Body of pancreas (tissue), 4 donors: ENCODE measurements at regions of chr6 and their contacts with region 1.

Region 1: GRCh38 chr6:106556368-106556960 is 72.8 kb downstream of the RTN4IP1 start:
- DNase-seq: no peak
- ATAC-seq: no peak
- H3K4me3 ChIP-seq: no peak overlapping the region
- H3K27ac ChIP-seq: no peak overlapping the region
- H3K4me1 ChIP-seq: no peaks in the 10 kb centered on the region
- H3K27me3 ChIP-seq: no peaks in the 10 kb centered on the region
- CTCF ChIP-seq: peak in 6 of 7 experiments; percentile 14 to 49 (median 36)
- POLR2A ChIP-seq: no peak

Region 2: DNA sequence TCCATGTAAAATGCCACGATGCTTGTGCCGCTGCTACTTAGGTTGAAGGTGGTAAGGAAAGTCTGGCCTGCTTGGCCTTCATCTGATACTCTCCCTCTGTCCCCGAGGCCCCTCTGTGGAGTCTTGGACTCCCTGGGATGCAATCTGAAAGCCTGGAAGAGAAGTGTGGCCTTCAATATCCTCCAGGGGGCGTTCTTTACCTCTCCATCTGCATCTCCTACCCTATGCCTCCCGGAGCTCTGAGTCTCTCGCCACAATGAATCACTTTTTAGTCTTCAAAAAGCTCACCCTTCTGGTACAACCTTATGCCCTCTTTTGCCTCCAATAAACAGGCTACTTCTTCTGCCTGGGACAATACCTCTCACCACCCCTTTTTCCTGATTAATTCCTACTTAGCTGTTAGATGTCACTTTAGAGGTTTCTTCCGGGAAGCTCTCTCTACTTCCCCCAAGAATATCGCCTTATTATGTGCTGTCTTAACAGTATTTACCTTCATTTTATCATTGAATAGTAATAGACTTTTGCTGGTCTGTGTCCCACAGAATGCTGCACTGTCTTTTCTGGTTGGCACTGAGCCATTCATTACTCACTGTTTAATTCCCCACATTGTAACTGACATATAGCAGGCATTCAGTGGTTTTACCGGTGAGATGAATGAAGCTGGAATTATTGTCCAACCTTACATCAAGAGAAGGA is 217.0 kb before region 1 on chr6:
- intact Hi-C with region 1: loop called (anchors 5 kb)
- DNase-seq: peak; percentile 57 to 73 (median 67)
- ATAC-seq: peak; percentile 91
- H3K4me3 ChIP-seq: no peak overlapping the region
- H3K27ac ChIP-seq: peak overlapping the region in 1 of 4 donors; percentile 3
- H3K4me1 ChIP-seq: peaks cover 5% of the 10 kb centered on the region
- H3K27me3 ChIP-seq: no peaks in the 10 kb centered on the region
- CTCF ChIP-seq: peak; percentile 58 to 77 (median 71)
- POLR2A ChIP-seq: no peak